SK-N-SH (cell line): ENCODE measurements at regions of chr7 and their contacts with region 1.

Region 1: DNA sequence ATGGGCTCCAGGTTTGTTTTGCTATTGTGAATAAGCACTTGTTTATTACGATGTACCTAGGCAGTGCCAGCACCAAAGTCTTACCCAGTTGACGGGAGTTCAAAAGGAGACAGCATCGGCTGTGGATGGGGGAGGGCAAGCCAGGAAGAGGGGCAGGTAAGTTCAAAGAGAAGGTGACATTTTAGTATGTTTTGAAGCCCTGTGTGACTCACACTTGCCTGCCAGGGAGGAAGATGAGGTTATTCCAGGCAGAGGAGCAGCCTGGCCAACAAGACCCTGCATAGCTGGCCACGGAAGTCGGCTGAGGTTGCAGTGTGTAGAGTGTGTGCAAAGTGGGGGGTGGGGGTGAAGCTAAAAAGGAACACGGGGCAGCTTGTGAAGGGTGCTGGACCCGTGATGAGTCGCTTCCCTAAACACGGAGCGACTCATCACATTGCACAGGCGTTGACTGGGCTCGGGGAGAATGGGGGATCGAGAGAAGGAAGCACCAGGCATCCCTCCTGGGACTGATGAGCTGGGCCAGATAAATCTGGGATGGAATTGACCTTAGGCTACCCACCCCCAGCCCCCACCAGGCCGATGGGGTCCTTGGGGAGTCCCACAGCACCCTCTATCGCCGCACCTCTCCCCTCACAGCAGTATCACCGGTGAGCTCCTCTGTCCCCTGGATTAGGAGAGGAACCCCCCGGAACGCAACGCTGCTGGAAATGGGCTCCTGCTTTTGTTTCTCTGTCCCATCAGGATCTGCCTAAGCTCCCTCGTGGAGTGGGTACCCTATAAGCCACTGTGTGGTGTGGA is 97.9 kb upstream of the IKZF1 start:
- DNase-seq: no peak
- H3K4me3 ChIP-seq: no peak overlapping the region
- H3K27ac ChIP-seq: no peak overlapping the region
- H3K4me1 ChIP-seq: no peaks in the 10 kb centered on the region
- H3K27me3 ChIP-seq: no peaks in the 10 kb centered on the region
- CTCF ChIP-seq: no peak
- EP300 ChIP-seq: no peak
- RAD21 ChIP-seq: no peak

Region 2: GRCh38 chr7:50047716-50048115 is 158.9 kb before region 1 on chr7:
- CTCF ChIA-PET with region 1: no interaction called
- POLR2A ChIA-PET with region 1: no interaction called
- DNase-seq: no peak
- H3K4me3 ChIP-seq: no peak overlapping the region
- H3K27ac ChIP-seq: no peak overlapping the region
- H3K4me1 ChIP-seq: no peaks in the 10 kb centered on the region
- H3K27me3 ChIP-seq: no peaks in the 10 kb centered on the region
- CTCF ChIP-seq: no peak
- EP300 ChIP-seq: no peak
- RAD21 ChIP-seq: no peak

Region 3: GRCh38 chr7:50178166-50178565 is 28.5 kb before region 1 on chr7:
- CTCF ChIA-PET with region 1: interaction called, 11 read pairs
- POLR2A ChIA-PET with region 1: no interaction called
- DNase-seq: no peak
- H3K4me3 ChIP-seq: no peak overlapping the region
- H3K27ac ChIP-seq: no peak overlapping the region
- H3K4me1 ChIP-seq: peaks cover 0 to 3% of the 10 kb centered on the region in 2 experiments; a peak in 1 of 4 replicates
- H3K27me3 ChIP-seq: no peaks in the 10 kb centered on the region
- CTCF ChIP-seq: no peak
- EP300 ChIP-seq: no peak
- RAD21 ChIP-seq: no peak

Region 4: GRCh38 chr7:50246551-50246950 is 39.9 kb after region 1 on chr7:
- CTCF ChIA-PET with region 1: interaction called, 10 read pairs
- POLR2A ChIA-PET with region 1: no interaction called
- DNase-seq: no peak
- H3K4me3 ChIP-seq: no peak overlapping the region
- H3K27ac ChIP-seq: no peak overlapping the region
- H3K4me1 ChIP-seq: no peaks in the 10 kb centered on the region
- H3K27me3 ChIP-seq: no peaks in the 10 kb centered on the region
- CTCF ChIP-seq: no peak
- EP300 ChIP-seq: no peak
- RAD21 ChIP-seq: no peak

Region 5: GRCh38 chr7:50346553-50347497 is 140.2 kb after region 1 on chr7:
- CTCF ChIA-PET with region 1: interaction called, 10 read pairs
- POLR2A ChIA-PET with region 1: no interaction called
- DNase-seq: no peak
- H3K4me3 ChIP-seq: no peak overlapping the region
- H3K27ac ChIP-seq: no peak overlapping the region
- H3K4me1 ChIP-seq: peaks cover 0 to 18% of the 10 kb centered on the region in 2 experiments; a peak in 2 of 4 replicates
- H3K27me3 ChIP-seq: peaks cover 6% of the 10 kb centered on the region
- CTCF ChIP-seq: no peak
- EP300 ChIP-seq: no peak
- RAD21 ChIP-seq: no peak

Region 6: DNA sequence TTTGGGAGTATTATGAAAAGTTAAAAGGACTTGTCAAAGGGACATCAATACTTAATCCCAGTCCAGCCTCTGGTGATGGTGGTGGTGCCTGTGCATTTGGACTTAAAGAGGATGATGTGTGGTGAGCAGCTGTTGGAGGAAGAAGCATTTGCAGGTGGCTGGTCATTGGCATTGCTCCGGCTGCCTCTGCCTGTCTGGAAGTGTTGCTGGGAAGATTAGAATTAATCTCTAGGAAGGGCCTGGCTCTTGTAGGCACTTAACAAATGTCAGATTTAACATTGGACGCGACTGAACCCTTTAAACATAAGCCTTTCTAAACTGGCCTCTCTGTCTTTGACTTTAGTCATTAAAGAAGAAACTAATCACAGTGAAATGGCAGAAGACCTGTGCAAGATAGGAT is 184.7 kb after region 1 on chr7:
- CTCF ChIA-PET with region 1: interaction called, 10 read pairs
- POLR2A ChIA-PET with region 1: interaction called, 3 read pairs
- DNase-seq: no peak
- H3K4me3 ChIP-seq: no peak overlapping the region
- H3K27ac ChIP-seq: no peak overlapping the region
- H3K4me1 ChIP-seq: peaks cover 0 to 2% of the 10 kb centered on the region in 2 experiments; a peak in 1 of 4 replicates
- H3K27me3 ChIP-seq: 0 out of 2 replicates have a peak, but pooled peaks cover 28% of the 10 kb centered on the region
- CTCF ChIP-seq: no peak
- EP300 ChIP-seq: no peak
- RAD21 ChIP-seq: no peak

Region 7: DNA sequence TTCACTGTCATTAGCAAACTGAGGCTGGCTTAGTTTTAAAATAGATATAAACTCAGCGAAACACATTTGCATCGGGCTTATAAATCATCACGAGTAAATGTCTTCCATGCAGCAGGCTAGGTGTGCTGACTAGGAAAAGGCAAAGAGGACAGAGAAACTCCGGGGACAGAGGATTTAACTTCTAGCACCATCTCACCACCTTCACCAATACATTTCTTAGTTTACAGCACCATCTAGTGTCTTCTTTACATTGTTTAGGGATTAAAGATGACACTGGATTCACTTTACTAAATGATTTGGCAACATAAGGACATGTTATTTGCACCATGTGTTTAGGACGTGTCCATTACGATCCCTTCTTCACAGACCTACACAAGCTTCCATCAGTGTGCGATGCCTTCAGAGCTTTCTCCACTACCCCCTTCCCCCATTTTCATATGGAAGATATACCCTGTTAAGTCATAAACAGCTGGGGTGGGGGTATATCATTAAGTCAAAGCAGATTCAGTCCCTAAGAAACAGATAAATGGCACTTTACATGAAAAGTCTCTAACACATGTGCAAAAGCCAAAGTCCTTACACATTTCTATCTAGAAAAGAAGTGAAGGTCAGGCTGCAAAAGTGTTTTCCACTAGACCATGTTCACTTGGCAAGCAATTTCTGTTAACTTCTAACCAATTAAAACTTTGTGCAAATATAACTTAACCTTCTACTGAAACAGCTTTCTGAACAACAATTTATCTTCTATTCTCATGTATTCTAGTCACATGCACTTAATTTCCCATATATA is 472.8 kb after region 1 on chr7:
- CTCF ChIA-PET with region 1: interaction called, 94 read pairs
- POLR2A ChIA-PET with region 1: no interaction called
- DNase-seq: peak; percentile 80
- H3K4me3 ChIP-seq: no peak overlapping the region
- H3K27ac ChIP-seq: no peak overlapping the region
- H3K4me1 ChIP-seq: peaks cover 0 to 22% of the 10 kb centered on the region in 2 experiments; a peak in 2 of 4 replicates
- H3K27me3 ChIP-seq: no peaks in the 10 kb centered on the region
- CTCF ChIP-seq: peak; percentile 68
- EP300 ChIP-seq: no peak
- RAD21 ChIP-seq: peak; percentile 99